Activated CD4-positive, alpha-beta memory T cell treated with anti-CD3 and anti-CD28 coated beads for 36 hours (primary cell): ENCODE measurements at regions of chr9 and their contacts with region 1.

Region 1: GRCh38 chr9:36597412-36598178 is 24.9 kb downstream of the MELK start:
- DNase-seq: no peak
- H3K4me3 Mint-ChIP-seq: no peak overlapping the region
- H3K27ac Mint-ChIP-seq: no peak overlapping the region
- H3K4me1 Mint-ChIP-seq: peaks cover 8% of the 10 kb centered on the region
- H3K27me3 Mint-ChIP-seq: no peaks in the 10 kb centered on the region

Region 2: GRCh38 chr9:36461323-36461722 is 136.3 kb before region 1 on chr9:
- CTCF ChIA-PET with region 1: no interaction called
- POLR2A ChIA-PET with region 1: no interaction called
- intact Hi-C with region 1: no loop called
- DNase-seq: no peak
- H3K4me3 Mint-ChIP-seq: no peak overlapping the region
- H3K27ac Mint-ChIP-seq: no peak overlapping the region
- H3K4me1 Mint-ChIP-seq: peaks cover 48% of the 10 kb centered on the region
- H3K27me3 Mint-ChIP-seq: no peaks in the 10 kb centered on the region

Region 3: GRCh38 chr9:36665921-36666431 is 68.4 kb after region 1 on chr9:
- CTCF ChIA-PET with region 1: no interaction called
- POLR2A ChIA-PET with region 1: no interaction called
- intact Hi-C with region 1: loop called (anchors 10 kb)
- DNase-seq: no peak
- H3K4me3 Mint-ChIP-seq: no peak overlapping the region
- H3K27ac Mint-ChIP-seq: no peak overlapping the region
- H3K4me1 Mint-ChIP-seq: peaks cover 12% of the 10 kb centered on the region
- H3K27me3 Mint-ChIP-seq: no peaks in the 10 kb centered on the region

Region 4: DNA sequence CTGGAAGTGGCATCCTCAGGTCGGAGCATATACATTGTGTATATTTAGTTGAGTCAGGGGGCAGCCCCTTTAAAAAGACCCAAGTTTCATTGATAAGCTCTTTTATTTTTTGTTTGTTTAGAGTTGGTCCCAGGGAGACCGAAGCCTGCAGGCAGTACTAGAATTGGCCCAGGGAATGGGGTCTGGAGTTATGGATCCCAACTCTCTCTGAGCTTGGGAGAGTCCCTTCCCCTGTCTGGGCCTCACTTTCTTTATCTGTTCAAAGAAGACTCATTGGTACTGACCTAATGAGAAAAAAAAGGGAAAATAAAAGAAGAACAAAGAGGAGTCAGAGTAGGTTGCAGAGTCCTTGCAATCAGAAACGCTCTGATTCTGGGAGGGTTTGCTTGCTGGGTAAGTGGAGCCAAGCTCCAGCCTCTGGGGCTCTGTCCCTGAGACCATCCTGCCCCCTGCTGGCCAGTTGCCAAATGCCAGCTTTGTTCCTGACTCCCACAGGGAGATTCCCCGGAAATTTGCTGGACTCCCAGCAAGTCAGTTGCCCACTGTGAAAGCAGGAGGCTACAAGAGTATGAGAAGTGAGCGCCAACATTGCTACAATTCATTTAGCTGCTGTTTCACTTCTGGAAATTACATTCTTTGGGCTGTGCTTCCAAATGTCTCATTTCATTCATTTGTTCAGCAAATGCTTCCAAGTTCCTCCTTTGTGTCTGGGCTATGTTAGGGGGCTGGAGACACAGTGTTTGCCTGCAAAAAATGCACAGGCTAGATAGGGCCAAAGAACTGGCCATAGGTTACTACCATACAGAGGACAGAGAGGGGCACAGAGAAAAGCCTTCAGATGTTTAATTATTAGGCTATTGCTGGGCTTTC is 131.3 kb after region 1 on chr9:
- CTCF ChIA-PET with region 1: interaction called, 16 read pairs
- POLR2A ChIA-PET with region 1: interaction called, 3 read pairs
- intact Hi-C with region 1: no loop called
- DNase-seq: peak; percentile 81
- H3K4me3 Mint-ChIP-seq: no peak overlapping the region
- H3K27ac Mint-ChIP-seq: no peak overlapping the region
- H3K4me1 Mint-ChIP-seq: no peaks in the 10 kb centered on the region
- H3K27me3 Mint-ChIP-seq: no peaks in the 10 kb centered on the region